K562 (cell line): ENCODE measurements at regions of chr7 and their contacts with region 1.

Region 1: DNA sequence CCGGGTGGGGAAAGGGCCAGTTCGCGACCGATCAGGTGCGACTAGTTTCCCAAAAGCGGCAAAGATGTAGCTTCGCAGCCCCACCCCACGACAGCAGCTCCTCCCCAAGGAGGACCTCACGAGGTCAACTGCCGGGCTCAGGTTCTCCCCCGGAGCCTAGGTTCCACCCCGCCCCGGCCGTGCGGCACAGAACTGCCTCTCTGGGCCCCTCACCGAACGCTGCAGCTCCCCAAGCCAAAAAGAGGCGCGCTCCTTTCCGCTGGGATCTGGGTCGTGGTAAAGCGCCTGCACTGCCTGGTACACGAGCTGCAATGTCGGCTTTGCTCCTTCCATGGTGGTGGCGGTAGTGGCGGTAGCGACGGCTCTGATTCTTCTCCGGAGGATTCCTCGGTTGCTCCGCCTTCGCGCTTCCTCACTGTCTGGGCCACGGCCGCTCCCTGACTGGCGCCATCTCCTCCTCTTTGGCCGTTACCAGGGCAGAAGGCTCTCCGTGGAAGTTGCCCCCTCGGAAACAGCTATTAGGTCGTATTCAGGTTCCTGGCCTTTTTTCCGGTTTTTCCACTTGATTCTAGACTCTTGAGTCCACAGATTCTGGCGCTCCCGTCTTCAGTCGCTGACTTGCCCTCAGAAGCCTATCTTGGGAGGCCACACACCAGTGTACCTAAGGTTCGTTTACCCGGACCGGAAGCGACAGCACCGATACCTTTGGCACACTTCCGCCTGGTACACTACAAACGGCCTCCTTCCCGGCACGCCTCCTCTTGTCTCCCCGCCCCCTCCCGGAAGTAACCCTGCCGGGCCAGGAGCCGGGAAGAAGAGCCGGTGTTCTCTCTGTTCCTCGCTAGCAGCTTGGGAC is at the start of gene TNPO3:
- DNase-seq: peak; percentile 97 to 99 (median 98)
- ATAC-seq: peak; percentile 91
- H3K4me3 ChIP-seq: peak within 1 kb of the TSS; percentile 80
- H3K27ac ChIP-seq: peak within 1 kb of the TSS; percentile 99
- H3K4me1 ChIP-seq: peaks cover 18 to 21% of the 10 kb centered on the region in 2 experiments; a peak in 4 of 5 replicates
- H3K27me3 ChIP-seq: no peaks in the 10 kb centered on the region
- CTCF ChIP-seq: peak in 2 of 3 experiments; percentile 1 to 7; a peak in 2 of 6 replicates
- EP300 ChIP-seq: peak; percentile 70
- POLR2A ChIP-seq: peak; percentile 98
- RAD21 ChIP-seq: 0 out of 4 replicates have a peak, but pooled peaks of 1 of the 2 experiments have one; percentile 10
- polyA plus RNA-seq, gene TNPO3: 35.8 to 46.0 TPM

Region 2: DNA sequence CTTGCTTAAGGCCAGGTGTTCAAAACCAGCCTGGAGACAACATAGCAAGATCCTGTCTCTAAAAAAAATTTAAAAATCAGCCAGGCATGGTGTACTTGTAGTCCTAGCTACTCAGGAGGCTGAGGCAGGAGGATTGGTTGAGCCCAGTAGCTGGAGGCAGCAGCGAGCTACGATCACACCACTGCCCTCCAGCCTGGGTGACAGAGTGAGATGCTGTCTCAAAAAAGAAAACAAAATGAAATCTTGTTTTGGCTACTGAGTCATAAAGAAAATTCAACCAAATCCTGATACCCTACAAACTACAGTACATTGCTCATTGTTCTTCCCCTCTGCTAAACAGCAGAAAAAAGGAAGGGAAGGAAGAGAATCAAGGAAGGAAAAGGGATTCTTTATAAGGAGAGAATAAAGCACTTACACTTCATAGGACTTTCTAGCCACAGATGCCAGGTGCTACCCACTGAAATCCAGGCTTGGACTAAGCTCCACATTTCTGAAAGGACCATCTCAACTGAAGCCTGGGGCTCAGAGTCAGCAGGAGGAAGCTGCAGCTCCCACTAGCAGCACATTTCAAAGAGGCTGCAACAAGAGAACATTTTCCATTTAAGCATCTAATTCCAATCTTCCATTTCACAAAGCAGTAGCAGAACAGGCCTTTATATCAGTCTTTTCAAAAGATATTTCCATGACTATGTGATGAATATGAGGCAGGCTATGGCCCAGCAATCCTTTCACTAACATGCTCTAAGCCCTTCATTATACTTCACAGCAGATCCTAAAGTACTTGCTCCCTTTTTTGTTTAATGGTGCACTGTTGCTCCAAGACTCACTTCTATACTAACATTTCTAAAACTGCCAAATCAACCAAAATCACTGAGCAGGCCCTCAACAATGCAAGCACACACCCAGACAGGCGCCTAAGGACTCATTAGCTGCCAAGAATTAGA is 13.3 kb before region 1 on chr7:
- CTCF ChIA-PET with region 1: no interaction called
- POLR2A ChIA-PET with region 1: interaction called, 22 read pairs
- in situ Hi-C with region 1: no loop called
- intact Hi-C with region 1: no loop called
- DNase-seq: no peak
- ATAC-seq: peak; percentile 12; the same call in 1 of the 3 replicates
- H3K4me3 ChIP-seq: no peak overlapping the region
- H3K27ac ChIP-seq: no peak overlapping the region
- H3K4me1 ChIP-seq: peaks cover 0 to 2% of the 10 kb centered on the region in 2 experiments; a peak in 2 of 5 replicates
- H3K27me3 ChIP-seq: no peaks in the 10 kb centered on the region
- CTCF ChIP-seq: no peak
- EP300 ChIP-seq: no peak
- POLR2A ChIP-seq: no peak
- RAD21 ChIP-seq: no peak

Region 3: GRCh38 chr7:129351320-129351719 is 296.7 kb after region 1 on chr7:
- CTCF ChIA-PET with region 1: no interaction called
- POLR2A ChIA-PET with region 1: no interaction called
- in situ Hi-C with region 1: no loop called
- intact Hi-C with region 1: no loop called
- DNase-seq: no peak
- ATAC-seq: no peak
- H3K4me3 ChIP-seq: no peak overlapping the region
- H3K27ac ChIP-seq: no peak overlapping the region
- H3K4me1 ChIP-seq: no peaks in the 10 kb centered on the region
- H3K27me3 ChIP-seq: no peaks in the 10 kb centered on the region
- CTCF ChIP-seq: no peak
- EP300 ChIP-seq: no peak
- POLR2A ChIP-seq: no peak
- RAD21 ChIP-seq: no peak